Activated B cell treated with CpG ODN at 0.5 μM for 24 hours (primary cell): ENCODE measurements at regions of chr6 and their contacts with region 1.

Region 1: DNA sequence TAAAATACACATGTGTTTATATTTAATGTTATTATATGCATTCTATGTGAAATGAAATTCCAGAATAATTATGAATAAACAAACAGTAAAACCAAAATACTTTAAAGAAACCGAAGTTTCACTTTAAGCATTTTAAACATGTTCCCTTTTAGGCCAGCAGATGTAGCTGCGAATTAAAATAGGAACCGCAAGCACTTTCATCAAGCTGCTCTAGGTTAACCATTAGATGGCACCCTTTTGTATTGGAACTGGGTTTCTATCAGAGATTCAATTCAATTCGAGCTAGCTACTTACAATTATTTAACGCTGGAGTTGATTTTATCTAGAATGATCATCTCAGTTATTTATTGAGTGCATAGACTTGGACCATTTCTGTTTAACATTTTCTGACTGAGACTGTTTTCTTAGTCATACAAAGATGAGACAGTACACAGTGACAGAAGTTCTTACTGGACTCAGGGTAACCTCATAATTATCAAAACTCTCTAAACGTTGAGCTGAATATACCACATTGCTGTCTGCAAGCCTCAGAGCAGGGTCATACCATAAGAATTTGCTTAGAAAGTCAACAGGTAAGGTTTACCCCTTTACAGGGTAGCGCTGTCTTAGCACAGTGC is 8.5 kb downstream of the TMEM242 start:
- DNase-seq: no peak
- ATAC-seq: peak; percentile 94
- H3K4me3 Mint-ChIP-seq: no peak overlapping the region
- H3K27ac Mint-ChIP-seq: peak overlapping the region; percentile 8
- H3K4me1 Mint-ChIP-seq: peaks cover 4% of the 10 kb centered on the region
- H3K27me3 Mint-ChIP-seq: no peaks in the 10 kb centered on the region
- CTCF ChIP-seq: peak; percentile 93

Region 2: DNA sequence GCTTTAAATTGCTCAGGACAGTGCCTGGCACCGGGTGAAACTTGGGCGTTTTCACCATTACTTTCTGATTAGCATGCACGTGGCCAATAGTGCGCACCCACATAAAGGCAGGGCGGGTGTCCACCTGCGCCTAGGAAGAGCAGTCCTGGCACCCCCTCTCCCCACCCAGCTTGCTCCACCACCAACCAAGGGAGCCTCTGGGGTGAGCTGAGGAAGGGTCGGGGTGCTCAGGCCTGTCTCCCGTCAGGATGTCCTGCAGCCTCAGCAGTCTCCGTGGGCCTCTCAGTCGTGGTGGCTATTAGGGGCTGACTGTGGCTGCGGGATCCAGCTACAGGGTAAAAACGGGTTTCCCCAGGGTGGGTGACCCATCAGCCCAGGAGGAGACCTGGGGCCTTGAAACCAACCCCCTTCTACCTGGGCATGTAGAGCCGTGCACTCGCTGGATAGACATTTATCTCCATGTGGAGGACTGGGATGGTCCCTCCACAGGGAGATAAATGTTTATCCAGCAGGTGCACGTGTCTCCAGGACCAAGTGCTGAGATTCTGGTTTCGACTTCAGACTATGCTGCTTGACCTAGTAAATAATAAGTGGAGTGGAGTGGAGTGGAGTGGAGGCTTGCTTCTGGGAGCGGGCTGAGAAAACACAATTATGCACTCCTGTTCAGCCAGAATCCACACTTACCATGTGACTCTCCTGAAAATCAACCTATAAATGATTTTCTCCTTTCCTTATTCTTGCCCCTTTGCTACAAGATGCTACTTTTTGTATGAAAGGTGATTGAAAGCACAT is 157.3 kb after region 1 on chr6:
- CTCF ChIA-PET with region 1: no interaction called
- POLR2A ChIA-PET with region 1: no interaction called
- intact Hi-C with region 1: no loop called
- DNase-seq: no peak
- ATAC-seq: no peak
- H3K4me3 Mint-ChIP-seq: no peak overlapping the region
- H3K27ac Mint-ChIP-seq: peak overlapping the region; percentile 31
- H3K4me1 Mint-ChIP-seq: peaks cover 19% of the 10 kb centered on the region
- H3K27me3 Mint-ChIP-seq: no peaks in the 10 kb centered on the region
- CTCF ChIP-seq: no peak

Region 3: GRCh38 chr6:157597446-157598312 is 282.9 kb after region 1 on chr6:
- CTCF ChIA-PET with region 1: interaction called, 11 read pairs
- POLR2A ChIA-PET with region 1: no interaction called
- intact Hi-C with region 1: loop called (anchors 1 kb)
- DNase-seq: no peak
- ATAC-seq: peak; percentile 70
- H3K4me3 Mint-ChIP-seq: peak overlapping the region; percentile 46
- H3K27ac Mint-ChIP-seq: peak overlapping the region; percentile 71
- H3K4me1 Mint-ChIP-seq: peaks cover 54% of the 10 kb centered on the region
- H3K27me3 Mint-ChIP-seq: no peaks in the 10 kb centered on the region
- CTCF ChIP-seq: no peak

Region 4: DNA sequence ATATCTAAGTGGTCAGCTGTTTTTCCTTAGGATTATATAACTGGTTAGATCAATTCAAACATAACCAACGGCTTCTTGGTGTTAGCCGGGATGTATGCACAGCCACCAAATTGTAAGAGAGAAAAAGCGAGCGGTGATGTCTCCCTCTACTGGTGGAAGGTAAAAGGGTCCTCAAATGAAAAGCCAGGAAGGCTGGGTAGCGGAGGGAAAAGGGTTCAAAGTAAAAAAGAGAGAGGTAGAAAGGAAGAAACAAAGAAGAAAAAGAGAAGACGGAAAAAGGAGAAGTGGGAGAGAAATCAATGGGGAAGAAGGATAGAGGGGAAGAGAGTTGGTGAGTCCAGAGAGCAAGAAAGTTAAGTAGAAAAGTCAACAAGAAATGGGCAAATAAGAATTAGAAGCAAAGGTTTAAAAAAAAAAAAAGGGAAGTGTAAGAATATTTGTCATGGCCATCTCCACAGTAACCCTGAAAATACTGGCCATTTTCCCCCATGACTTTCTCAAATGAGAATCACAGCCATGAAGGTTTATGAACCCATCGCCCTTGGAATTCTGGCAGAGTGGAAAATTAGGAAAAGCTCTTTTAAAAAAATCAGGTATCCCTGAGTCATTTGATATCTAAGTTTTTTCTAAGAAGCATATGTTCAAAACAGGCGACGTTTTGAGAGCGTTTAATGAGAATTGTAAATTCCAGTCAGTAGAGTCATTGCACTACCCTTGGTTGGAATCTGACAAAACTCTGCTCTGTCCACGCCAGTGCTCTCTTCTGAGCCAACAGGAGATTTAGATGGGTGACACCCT is 352.6 kb after region 1 on chr6:
- CTCF ChIA-PET with region 1: interaction called, 66 read pairs
- POLR2A ChIA-PET with region 1: interaction called, 6 read pairs
- intact Hi-C with region 1: loop called (anchors 1 kb)
- DNase-seq: no peak
- ATAC-seq: peak; percentile 84
- H3K4me3 Mint-ChIP-seq: peak overlapping the region; percentile 48
- H3K27ac Mint-ChIP-seq: peak overlapping the region; percentile 33
- H3K4me1 Mint-ChIP-seq: peaks cover 10% of the 10 kb centered on the region
- H3K27me3 Mint-ChIP-seq: no peaks in the 10 kb centered on the region
- CTCF ChIP-seq: peak; percentile 72

Region 5: GRCh38 chr6:157873735-157874344 is 559.0 kb after region 1 on chr6:
- CTCF ChIA-PET with region 1: interaction called, 11 read pairs
- POLR2A ChIA-PET with region 1: no interaction called
- intact Hi-C with region 1: loop called (anchors 1 kb)
- DNase-seq: peak; percentile 73
- ATAC-seq: peak; percentile 87
- H3K4me3 Mint-ChIP-seq: no peak overlapping the region
- H3K27ac Mint-ChIP-seq: no peak overlapping the region
- H3K4me1 Mint-ChIP-seq: peaks cover 26% of the 10 kb centered on the region
- H3K27me3 Mint-ChIP-seq: no peaks in the 10 kb centered on the region
- CTCF ChIP-seq: peak; percentile 63

Region 6: DNA sequence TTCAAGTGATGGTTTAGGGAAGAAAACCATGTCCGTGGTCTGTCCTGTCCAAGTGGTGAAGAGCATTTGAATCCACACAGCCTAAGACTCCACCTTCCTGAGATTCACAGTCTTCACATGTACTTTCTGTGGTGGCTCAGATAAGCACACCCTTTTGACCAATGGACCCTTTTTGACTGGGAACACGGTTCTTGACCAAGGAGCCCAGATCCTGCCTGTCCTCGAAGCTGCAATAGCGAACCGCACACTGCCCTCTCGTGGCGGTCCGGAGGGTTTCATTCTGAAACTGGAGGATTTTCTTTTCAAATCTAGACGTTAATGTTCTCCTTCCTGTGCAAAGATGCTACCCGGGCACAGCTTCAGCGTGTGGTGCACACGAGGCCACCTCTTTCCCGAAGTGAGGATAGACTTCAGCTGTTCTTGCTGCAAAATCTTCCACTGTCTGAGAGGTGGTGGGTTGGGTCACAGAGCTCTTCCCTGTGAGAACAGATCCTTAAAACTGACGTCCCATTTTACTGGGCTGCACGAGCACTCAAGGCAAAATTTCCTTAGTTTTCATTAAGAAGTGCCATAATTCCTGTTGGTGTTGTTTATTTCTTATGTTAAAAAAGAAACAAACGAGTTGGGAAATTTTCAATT is 757.4 kb after region 1 on chr6:
- CTCF ChIA-PET with region 1: no interaction called
- POLR2A ChIA-PET with region 1: no interaction called
- intact Hi-C with region 1: loop called (anchors 5 kb)
- DNase-seq: peak; percentile 57
- ATAC-seq: no peak
- H3K4me3 Mint-ChIP-seq: no peak overlapping the region
- H3K27ac Mint-ChIP-seq: peak overlapping the region; percentile 42
- H3K4me1 Mint-ChIP-seq: peaks cover 3% of the 10 kb centered on the region
- H3K27me3 Mint-ChIP-seq: no peaks in the 10 kb centered on the region
- CTCF ChIP-seq: peak; percentile 74